ENCODE measurements at regions of chr16 and their contacts with region 1.

Region 1: GRCh38 chr16:79519448-79519847 is 81.1 kb downstream of the MAF start:
- DNase-seq: peak in 5 of 35 experiments; percentile 3 to 13 (median 4)
- ATAC-seq: no peak
- H3K4me3 ChIP-seq: no peak overlapping the region
- H3K4me3 Mint-ChIP-seq: no peak overlapping the region
- H3K27ac ChIP-seq: no peak overlapping the region
- H3K27ac Mint-ChIP-seq: no peak overlapping the region
- H3K4me1 ChIP-seq: peaks cover 0 to 10% of the 10 kb centered on the region in 2 experiments
- H3K4me1 Mint-ChIP-seq: peaks cover 6 to 9% (median 7%) of the 10 kb centered on the region in 3 donors
- H3K27me3 ChIP-seq: peaks cover 0 to 9% of the 10 kb centered on the region in 2 experiments
- H3K27me3 Mint-ChIP-seq: peaks cover 29 to 38% of the 10 kb centered on the region in 2 donors

Region 2: GRCh38 chr16:79484237-79484636 is 35.2 kb before region 1 on chr16:
- CTCF ChIA-PET with region 1: no interaction called
- POLR2A ChIA-PET with region 1: interaction called in 1 of 2 experiments, 11 read pairs
- DNase-seq: no peak
- ATAC-seq: no peak
- H3K4me3 ChIP-seq: no peak overlapping the region
- H3K4me3 Mint-ChIP-seq: no peak overlapping the region
- H3K27ac ChIP-seq: no peak overlapping the region
- H3K27ac Mint-ChIP-seq: no peak overlapping the region
- H3K4me1 ChIP-seq: no peaks in the 10 kb centered on the region
- H3K4me1 Mint-ChIP-seq: no peaks in the 10 kb centered on the region
- H3K27me3 ChIP-seq: peaks cover 0 to 5% of the 10 kb centered on the region in 2 experiments
- H3K27me3 Mint-ChIP-seq: peaks cover 9 to 13% of the 10 kb centered on the region in 2 donors

Measured in T-cell (primary cell).